ENCODE measurements at regions of chr13 and their contacts with region 1.

Region 1: GRCh38 chr13:48318821-48319511 is 15.4 kb downstream of the RB1 start:
- DNase-seq: peak in 2 of 5 donors; percentile 15 to 38
- H3K4me3 ChIP-seq: peak overlapping the region; percentile 30 to 36
- H3K4me3 Mint-ChIP-seq: peak overlapping the region; percentile 83 to 93 (median 89)
- H3K27ac ChIP-seq: peak overlapping the region; percentile 26
- H3K27ac Mint-ChIP-seq: peak overlapping the region; percentile 70 to 88 (median 80)
- H3K4me1 ChIP-seq: no peaks in the 10 kb centered on the region
- H3K4me1 Mint-ChIP-seq: peaks cover 15 to 31% (median 27%) of the 10 kb centered on the region in 4 donors
- H3K27me3 ChIP-seq: no peaks in the 10 kb centered on the region
- H3K27me3 Mint-ChIP-seq: no peaks in the 10 kb centered on the region

Region 2: GRCh38 chr13:48303359-48304142 is 15.4 kb before region 1 on chr13 and contains the start of gene RB1:
- CTCF ChIA-PET with region 1: no interaction called
- POLR2A ChIA-PET with region 1: interaction called, 5 read pairs
- intact Hi-C with region 1: loop called (anchors 2 kb)
- DNase-seq: peak; percentile 91 to 93 (median 92)
- H3K4me3 ChIP-seq: peak within 1 kb of the TSS; percentile 76 to 94
- H3K4me3 Mint-ChIP-seq: peak within 1 kb of the TSS; percentile 95 to 99 (median 97)
- H3K27ac ChIP-seq: peak within 1 kb of the TSS; percentile 96
- H3K27ac Mint-ChIP-seq: peak within 1 kb of the TSS; percentile 98 to 100 (median 99)
- H3K4me1 ChIP-seq: peaks cover 38% of the 10 kb centered on the region
- H3K4me1 Mint-ChIP-seq: peaks cover 21 to 41% (median 29%) of the 10 kb centered on the region in 4 donors
- H3K27me3 ChIP-seq: no peaks in the 10 kb centered on the region
- H3K27me3 Mint-ChIP-seq: no peaks in the 10 kb centered on the region
- total RNA-seq, gene RB1: 20.0 to 26.0 TPM